CD14-positive monocyte (primary cell): ENCODE measurements at regions of chr7 and their contacts with region 1.

Region 1: GRCh38 chr7:66740302-66740979 is at the start of gene RABGEF1:
- DNase-seq: peak; percentile 96 to 99 (median 99)
- H3K4me3 ChIP-seq: peak within 1 kb of the TSS; percentile 77 to 97 (median 79)
- H3K4me3 Mint-ChIP-seq: peak within 1 kb of the TSS; percentile 91 to 95
- H3K27ac ChIP-seq: peak within 1 kb of the TSS; percentile 97 to 99
- H3K27ac Mint-ChIP-seq: peak within 1 kb of the TSS; percentile 97 to 99 (median 98)
- H3K4me1 ChIP-seq: peaks cover 14 to 24% of the 10 kb centered on the region in 2 donors
- H3K4me1 Mint-ChIP-seq: peaks cover 29% of the 10 kb centered on the region
- H3K27me3 ChIP-seq: no peaks in the 10 kb centered on the region
- H3K27me3 Mint-ChIP-seq: peaks cover 0 to 2% (median 2%) of the 10 kb centered on the region in 3 donors
- CTCF ChIP-seq: no peak
- polyA plus RNA-seq, gene RABGEF1: 13.6 to 17.3 (median 17.1) TPM

Region 2: GRCh38 chr7:66681491-66682349 is 58.7 kb before region 1 on chr7:
- intact Hi-C with region 1: loop called (anchors 5 to 10 kb)
- DNase-seq: peak; percentile 96 to 98 (median 98)
- H3K4me3 ChIP-seq: peak overlapping the region; percentile 82 to 96 (median 93)
- H3K4me3 Mint-ChIP-seq: peak overlapping the region; percentile 91 to 93
- H3K27ac ChIP-seq: peak overlapping the region; percentile 97 to 99
- H3K27ac Mint-ChIP-seq: peak overlapping the region; percentile 96 to 99 (median 98)
- H3K4me1 ChIP-seq: peaks cover 16 to 18% of the 10 kb centered on the region in 2 donors
- H3K4me1 Mint-ChIP-seq: peaks cover 24% of the 10 kb centered on the region
- H3K27me3 ChIP-seq: no peaks in the 10 kb centered on the region
- H3K27me3 Mint-ChIP-seq: no peaks in the 10 kb centered on the region
- CTCF ChIP-seq: no peak

Region 3: DNA sequence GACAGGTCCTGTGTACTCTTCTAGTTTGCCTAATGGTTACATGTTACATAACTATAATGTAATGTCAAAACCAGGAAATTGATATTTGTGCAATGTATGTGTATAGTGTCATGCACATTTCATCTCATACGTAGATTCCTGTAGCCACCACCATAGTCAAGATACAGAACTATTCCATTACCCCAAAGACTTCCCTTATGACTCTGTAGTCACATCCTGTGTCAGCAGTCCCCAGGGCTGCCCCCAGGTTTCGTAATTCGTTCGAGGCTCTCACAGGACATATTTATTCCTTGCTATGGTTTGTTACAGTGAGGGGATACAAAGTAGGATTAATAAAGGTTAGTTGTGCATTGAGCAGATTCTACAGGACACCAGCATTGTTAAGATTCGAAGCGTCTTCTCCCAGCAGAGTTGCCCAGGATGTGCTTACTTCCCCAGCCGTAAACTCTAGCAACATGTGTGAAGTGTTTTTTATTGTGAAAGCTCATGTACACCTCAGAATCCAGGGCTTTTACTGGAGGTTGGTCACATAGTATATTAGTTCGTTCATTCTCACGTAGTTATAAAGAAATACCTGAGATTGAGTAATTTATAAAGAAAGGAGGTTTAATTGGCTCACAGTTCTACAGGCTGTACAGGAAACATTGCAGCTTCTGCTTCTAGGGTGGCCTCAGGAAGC is 18.6 kb after region 1 on chr7:
- intact Hi-C with region 1: loop called in 1 of 2 experiments (anchors 2 kb)
- DNase-seq: peak; percentile 90 to 98 (median 98)
- H3K4me3 ChIP-seq: peak overlapping the region in 1 of 3 experiments; percentile 33
- H3K4me3 Mint-ChIP-seq: peak overlapping the region; percentile 5 to 74
- H3K27ac ChIP-seq: peak overlapping the region; percentile 90 to 98
- H3K27ac Mint-ChIP-seq: peak overlapping the region; percentile 98 to 100 (median 100)
- H3K4me1 ChIP-seq: peaks cover 17 to 34% of the 10 kb centered on the region in 2 donors
- H3K4me1 Mint-ChIP-seq: peaks cover 38% of the 10 kb centered on the region
- H3K27me3 ChIP-seq: no peaks in the 10 kb centered on the region
- H3K27me3 Mint-ChIP-seq: peaks cover 0 to 1% (median 0%) of the 10 kb centered on the region in 3 donors
- CTCF ChIP-seq: no peak

Region 4: GRCh38 chr7:66844552-66845378 is 104.3 kb after region 1 on chr7:
- intact Hi-C with region 1: loop called in 1 of 2 experiments (anchors 5 kb)
- DNase-seq: peak; percentile 99 to 100 (median 99)
- H3K4me3 ChIP-seq: peak overlapping the region; percentile 60 to 92 (median 92)
- H3K4me3 Mint-ChIP-seq: peak overlapping the region; percentile 85 to 93
- H3K27ac ChIP-seq: peak overlapping the region; percentile 90 to 99
- H3K27ac Mint-ChIP-seq: peak overlapping the region; percentile 99 to 100 (median 99)
- H3K4me1 ChIP-seq: peaks cover 32 to 53% of the 10 kb centered on the region in 2 donors
- H3K4me1 Mint-ChIP-seq: peaks cover 38% of the 10 kb centered on the region
- H3K27me3 ChIP-seq: no peaks in the 10 kb centered on the region
- H3K27me3 Mint-ChIP-seq: peaks cover 0 to 2% (median 2%) of the 10 kb centered on the region in 3 donors
- CTCF ChIP-seq: peak; percentile 28